Activated CD4-positive, alpha-beta memory T cell treated with anti-CD3 and anti-CD28 coated beads for 36 hours (primary cell): ENCODE measurements at regions of chr16 and their contacts with region 1.

Region 1: GRCh38 chr16:3123986-3124886 is 10.6 kb upstream of the ZNF213 start:
- DNase-seq: peak; percentile 98
- H3K4me3 Mint-ChIP-seq: peak overlapping the region; percentile 98
- H3K27ac Mint-ChIP-seq: peak overlapping the region; percentile 95
- H3K4me1 Mint-ChIP-seq: peaks cover 21% of the 10 kb centered on the region
- H3K27me3 Mint-ChIP-seq: no peaks in the 10 kb centered on the region

Region 2: GRCh38 chr16:3099732-3100499 is 24.3 kb before region 1 on chr16:
- CTCF ChIA-PET with region 1: interaction called, 266 read pairs
- POLR2A ChIA-PET with region 1: interaction called, 5 read pairs
- intact Hi-C with region 1: loop called (anchors 1 kb)
- DNase-seq: peak; percentile 97
- H3K4me3 Mint-ChIP-seq: peak overlapping the region; percentile 65
- H3K27ac Mint-ChIP-seq: peak overlapping the region; percentile 54
- H3K4me1 Mint-ChIP-seq: peaks cover 39% of the 10 kb centered on the region
- H3K27me3 Mint-ChIP-seq: no peaks in the 10 kb centered on the region

Region 3: GRCh38 chr16:3106205-3106928 is 17.9 kb before region 1 on chr16:
- CTCF ChIA-PET with region 1: interaction called, 266 read pairs
- POLR2A ChIA-PET with region 1: interaction called, 6 read pairs
- intact Hi-C with region 1: no loop called
- DNase-seq: peak; percentile 95
- H3K4me3 Mint-ChIP-seq: peak overlapping the region; percentile 78
- H3K27ac Mint-ChIP-seq: peak overlapping the region; percentile 87
- H3K4me1 Mint-ChIP-seq: peaks cover 25% of the 10 kb centered on the region
- H3K27me3 Mint-ChIP-seq: no peaks in the 10 kb centered on the region